ENCODE measurements at regions of chr6 and their contacts with region 1.

Region 1: GRCh38 chr6:188821-189655 is 103.2 kb upstream of the DUSP22 start:
- DNase-seq: peak; percentile 93
- ATAC-seq: peak; percentile 73
- H3K4me3 Mint-ChIP-seq: peak overlapping the region; percentile 9
- H3K27ac Mint-ChIP-seq: peak overlapping the region; percentile 92
- H3K4me1 Mint-ChIP-seq: peaks cover 51% of the 10 kb centered on the region
- H3K27me3 Mint-ChIP-seq: no peaks in the 10 kb centered on the region
- CTCF ChIP-seq: peak; percentile 93

Region 2: GRCh38 chr6:168865-169455 is 20.1 kb before region 1 on chr6:
- CTCF ChIA-PET with region 1: interaction called, 15 read pairs
- POLR2A ChIA-PET with region 1: no interaction called
- intact Hi-C with region 1: no loop called
- DNase-seq: no peak
- ATAC-seq: no peak
- H3K4me3 Mint-ChIP-seq: no peak overlapping the region
- H3K27ac Mint-ChIP-seq: no peak overlapping the region
- H3K4me1 Mint-ChIP-seq: peaks cover 4% of the 10 kb centered on the region
- H3K27me3 Mint-ChIP-seq: peaks cover 4% of the 10 kb centered on the region
- CTCF ChIP-seq: peak; percentile 76

Region 3: DNA sequence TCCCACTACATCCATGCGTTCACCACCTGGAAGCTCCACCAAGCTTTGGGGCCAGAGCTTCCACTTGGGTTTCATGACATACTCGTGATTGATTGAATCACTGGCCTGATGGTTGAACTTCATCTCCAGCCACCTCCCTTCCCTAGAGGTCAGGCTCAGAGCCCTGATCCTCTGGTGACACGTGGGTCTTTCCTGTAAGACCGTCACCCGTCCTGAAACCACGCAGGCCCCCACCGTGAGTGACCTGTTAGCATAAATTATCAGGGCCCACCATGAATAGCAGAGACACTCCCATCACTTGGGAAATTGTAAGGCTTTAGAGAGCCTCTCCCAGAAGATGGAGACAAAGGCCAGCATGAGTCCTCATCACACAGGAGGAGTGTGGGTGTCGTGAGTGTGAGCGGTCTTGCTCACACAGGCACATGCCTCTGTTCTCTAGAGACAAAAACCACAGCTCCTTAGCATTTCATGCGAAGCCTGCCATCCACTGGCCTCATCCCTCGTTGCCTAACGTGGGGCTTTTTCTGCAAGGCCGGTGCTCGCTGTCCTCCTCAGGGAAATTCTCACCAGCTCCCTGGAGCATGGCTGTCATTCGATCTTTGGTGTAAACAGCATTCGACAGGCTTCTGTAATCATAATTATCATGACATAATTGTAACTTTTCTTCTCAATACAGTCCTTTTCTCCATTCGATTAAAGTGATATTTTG is 38.2 kb after region 1 on chr6:
- CTCF ChIA-PET with region 1: interaction called, 30 read pairs
- POLR2A ChIA-PET with region 1: interaction called, 5 read pairs
- intact Hi-C with region 1: loop called (anchors 2 kb)
- DNase-seq: peak; percentile 61
- ATAC-seq: no peak
- H3K4me3 Mint-ChIP-seq: no peak overlapping the region
- H3K27ac Mint-ChIP-seq: peak overlapping the region; percentile 4
- H3K4me1 Mint-ChIP-seq: peaks cover 74% of the 10 kb centered on the region
- H3K27me3 Mint-ChIP-seq: peaks cover 1% of the 10 kb centered on the region
- CTCF ChIP-seq: no peak

Region 4: DNA sequence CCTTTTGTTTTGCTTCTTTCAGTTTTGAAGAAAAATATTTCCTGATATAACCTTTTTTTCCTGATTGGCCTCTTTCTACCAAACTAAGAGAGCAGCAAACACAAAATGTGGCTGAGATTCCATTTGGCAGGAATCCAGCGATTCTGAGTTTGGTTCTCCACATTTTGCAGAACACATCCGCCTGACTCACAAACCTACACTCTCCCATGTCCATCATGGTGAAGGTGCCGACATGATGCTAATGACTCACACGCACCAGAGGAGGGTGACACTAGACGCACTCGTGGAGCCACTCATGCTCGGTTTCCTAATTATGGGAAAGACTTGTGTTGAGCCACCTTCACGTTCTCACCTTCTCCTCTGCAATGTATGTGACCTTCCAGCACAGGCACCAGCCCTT is 57.3 kb after region 1 on chr6:
- CTCF ChIA-PET with region 1: no interaction called
- POLR2A ChIA-PET with region 1: no interaction called
- intact Hi-C with region 1: no loop called
- DNase-seq: no peak
- ATAC-seq: no peak
- H3K4me3 Mint-ChIP-seq: no peak overlapping the region
- H3K27ac Mint-ChIP-seq: no peak overlapping the region
- H3K4me1 Mint-ChIP-seq: peaks cover 7% of the 10 kb centered on the region
- H3K27me3 Mint-ChIP-seq: no peaks in the 10 kb centered on the region
- CTCF ChIP-seq: no peak

Region 5: GRCh38 chr6:291697-292505 is 102.9 kb after region 1 on chr6 and contains the start of gene DUSP22:
- CTCF ChIA-PET with region 1: interaction called, 5 read pairs
- POLR2A ChIA-PET with region 1: interaction called, 5 read pairs
- intact Hi-C with region 1: loop called (anchors 5 kb)
- DNase-seq: peak; percentile 92
- ATAC-seq: peak; percentile 71
- H3K4me3 Mint-ChIP-seq: peak within 1 kb of the TSS; percentile 95
- H3K27ac Mint-ChIP-seq: peak within 1 kb of the TSS; percentile 97
- H3K4me1 Mint-ChIP-seq: peaks cover 58% of the 10 kb centered on the region
- H3K27me3 Mint-ChIP-seq: no peaks in the 10 kb centered on the region
- CTCF ChIP-seq: no peak
- total RNA-seq, gene DUSP22: 32.5 to 34.2 TPM

Region 6: GRCh38 chr6:391559-392440 is 202.8 kb after region 1 on chr6 and contains the start of gene IRF4:
- CTCF ChIA-PET with region 1: interaction called, 20 read pairs
- POLR2A ChIA-PET with region 1: interaction called, 116 read pairs
- intact Hi-C with region 1: loop called (anchors 5 kb)
- DNase-seq: peak; percentile 75
- ATAC-seq: peak; percentile 51
- H3K4me3 Mint-ChIP-seq: peak within 1 kb of the TSS; percentile 99
- H3K27ac Mint-ChIP-seq: peak within 1 kb of the TSS; percentile 97
- H3K4me1 Mint-ChIP-seq: peaks cover 52% of the 10 kb centered on the region
- H3K27me3 Mint-ChIP-seq: peaks cover 4% of the 10 kb centered on the region
- CTCF ChIP-seq: no peak
- total RNA-seq, gene IRF4: 409 to 439 TPM

Region 7: GRCh38 chr6:408599-409102 is 219.6 kb after region 1 on chr6:
- CTCF ChIA-PET with region 1: no interaction called
- POLR2A ChIA-PET with region 1: interaction called, 11 read pairs
- intact Hi-C with region 1: no loop called
- DNase-seq: no peak
- ATAC-seq: no peak
- H3K4me3 Mint-ChIP-seq: no peak overlapping the region
- H3K27ac Mint-ChIP-seq: peak overlapping the region; percentile 77
- H3K4me1 Mint-ChIP-seq: peaks cover 64% of the 10 kb centered on the region
- H3K27me3 Mint-ChIP-seq: no peaks in the 10 kb centered on the region
- CTCF ChIP-seq: peak; percentile 41